Ascending aorta (tissue), 2 donors: ENCODE measurements at regions of chr7 and their contacts with region 1.

Region 1: DNA sequence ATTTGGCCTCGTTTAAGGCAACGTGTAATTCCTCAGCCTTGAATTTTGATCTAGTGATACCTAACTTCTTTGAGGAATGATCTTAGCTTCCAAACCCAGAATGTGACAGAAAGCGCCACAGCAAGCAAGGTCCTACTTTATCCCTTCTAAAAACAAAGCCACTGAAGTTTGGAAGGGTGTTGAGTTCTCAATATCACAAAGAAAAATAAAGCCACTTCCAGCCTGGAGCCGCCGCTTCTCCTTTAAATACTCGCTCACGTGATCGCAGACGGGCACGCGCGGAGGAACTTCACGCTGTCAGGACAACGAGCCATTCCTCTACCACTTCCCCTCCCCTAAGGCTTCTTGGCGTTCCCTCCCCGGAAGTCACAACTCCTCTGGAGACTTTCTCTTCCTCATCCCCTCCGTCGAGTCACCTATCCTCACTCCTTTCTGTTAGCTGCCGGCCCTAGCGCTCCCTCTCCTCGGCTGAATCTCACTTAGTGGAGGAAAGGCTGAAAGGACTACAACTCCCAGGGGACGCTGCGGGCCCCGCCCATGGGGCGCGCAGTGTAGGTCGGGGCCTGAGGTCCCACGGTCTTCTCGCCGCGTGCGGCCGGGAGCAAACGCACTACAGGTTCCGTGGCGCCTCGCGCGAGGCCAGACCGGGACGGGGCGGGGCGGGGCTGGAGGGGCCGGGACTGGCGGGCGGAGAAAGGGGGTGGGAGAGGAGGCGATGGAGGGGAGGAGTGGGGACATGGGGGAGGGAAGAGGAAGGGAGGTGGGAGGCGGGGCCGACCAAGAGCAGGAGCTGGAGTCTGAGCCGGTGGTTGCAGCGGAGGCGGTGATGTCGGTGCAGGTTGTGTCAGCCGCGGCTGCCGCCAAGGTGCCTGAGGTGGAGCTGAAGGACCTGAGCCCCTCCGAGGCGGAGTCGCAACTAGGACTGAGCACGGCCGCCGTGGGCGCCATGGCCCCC is at the start of gene AHCYL2:
- DNase-seq: peak; percentile 91 to 99
- H3K4me3 ChIP-seq: peak within 1 kb of the TSS; percentile 93 to 99
- H3K27ac ChIP-seq: peak within 1 kb of the TSS; percentile 88 to 96
- H3K4me1 ChIP-seq: peaks cover 0 to 9% of the 10 kb centered on the region in 2 donors
- H3K27me3 ChIP-seq: no peaks in the 10 kb centered on the region
- CTCF ChIP-seq: no peak
- total RNA-seq, gene AHCYL2: 62.9 TPM

Region 2: GRCh38 chr7:128940494-128941322 is 283.8 kb before region 1 on chr7:
- intact Hi-C with region 1: no loop called
- DNase-seq: peak; percentile 30 to 78
- H3K4me3 ChIP-seq: peak overlapping the region in 1 of 2 donors; percentile 9
- H3K27ac ChIP-seq: no peak overlapping the region
- H3K4me1 ChIP-seq: peaks cover 4 to 8% of the 10 kb centered on the region in 2 donors
- H3K27me3 ChIP-seq: no peaks in the 10 kb centered on the region
- CTCF ChIP-seq: no peak

Region 3: GRCh38 chr7:129122751-129123509 is 101.6 kb before region 1 on chr7:
- intact Hi-C with region 1: no loop called
- DNase-seq: no peak
- H3K4me3 ChIP-seq: no peak overlapping the region
- H3K27ac ChIP-seq: no peak overlapping the region
- H3K4me1 ChIP-seq: no peaks in the 10 kb centered on the region
- H3K27me3 ChIP-seq: no peaks in the 10 kb centered on the region
- CTCF ChIP-seq: no peak

Region 4: GRCh38 chr7:129271500-129272355 is 47.2 kb after region 1 on chr7:
- intact Hi-C with region 1: no loop called
- DNase-seq: no peak
- H3K4me3 ChIP-seq: no peak overlapping the region
- H3K27ac ChIP-seq: no peak overlapping the region
- H3K4me1 ChIP-seq: no peaks in the 10 kb centered on the region
- H3K27me3 ChIP-seq: no peaks in the 10 kb centered on the region
- CTCF ChIP-seq: peak; percentile 5 to 43 (median 28)

Region 5: DNA sequence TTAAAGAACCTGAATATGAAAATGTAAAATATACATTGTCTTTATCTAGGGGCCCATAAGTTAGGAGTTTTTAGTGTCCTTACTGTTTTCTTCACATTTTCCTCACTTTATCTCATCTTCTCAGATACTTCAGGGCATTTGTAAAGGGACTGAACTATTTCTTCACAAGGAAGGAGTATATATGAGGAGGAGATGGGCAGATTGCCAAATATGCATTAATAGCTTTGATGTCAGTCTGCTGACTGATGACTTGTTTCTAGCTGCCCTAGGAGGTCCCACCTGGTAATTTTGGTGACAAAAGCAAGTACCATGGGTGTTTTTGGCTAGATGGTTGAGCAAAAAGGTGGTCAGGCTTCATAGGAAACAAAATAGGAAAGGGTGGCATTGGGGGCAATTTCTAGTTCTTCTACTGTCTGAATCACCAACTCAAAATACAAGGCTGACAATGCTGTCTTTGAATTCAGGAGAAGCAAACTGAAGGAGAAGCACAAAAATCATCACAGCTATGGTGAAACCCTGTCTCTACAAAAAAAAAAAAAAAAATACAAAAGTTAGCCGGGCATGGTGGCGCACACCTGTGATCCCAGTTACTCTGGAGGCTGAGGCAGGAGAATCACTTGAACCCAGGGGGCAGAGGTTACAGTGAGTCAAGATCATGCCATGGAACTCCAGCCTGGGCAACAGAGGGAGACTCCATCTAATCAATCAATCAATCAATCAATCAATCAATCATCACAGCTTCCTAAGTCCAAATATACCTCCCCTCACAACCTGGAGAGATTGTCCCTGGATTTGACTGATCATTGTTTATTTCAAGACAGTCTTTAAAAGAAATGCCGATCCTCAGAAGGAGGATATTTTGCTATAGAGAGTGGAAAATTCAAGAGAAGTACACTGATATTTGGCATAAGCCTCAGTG is 199.4 kb after region 1 on chr7:
- intact Hi-C with region 1: no loop called
- DNase-seq: no peak
- H3K4me3 ChIP-seq: no peak overlapping the region
- H3K27ac ChIP-seq: no peak overlapping the region
- H3K4me1 ChIP-seq: no peaks in the 10 kb centered on the region
- H3K27me3 ChIP-seq: no peaks in the 10 kb centered on the region
- CTCF ChIP-seq: no peak

Region 6: GRCh38 chr7:129433847-129434674 is 209.5 kb after region 1 on chr7 and contains the start of gene STRIP2:
- intact Hi-C with region 1: loop called (anchors 2 kb)
- DNase-seq: peak; percentile 68 to 93
- H3K4me3 ChIP-seq: peak within 1 kb of the TSS; percentile 75 to 80
- H3K27ac ChIP-seq: peak within 1 kb of the TSS in 1 of 2 donors; percentile 9
- H3K4me1 ChIP-seq: peaks cover 3 to 7% of the 10 kb centered on the region in 2 donors
- H3K27me3 ChIP-seq: no peaks in the 10 kb centered on the region
- CTCF ChIP-seq: no peak
- total RNA-seq, gene STRIP2: 2.3 TPM

Region 7: GRCh38 chr7:129611246-129612111 is 387.0 kb after region 1 on chr7 and contains the start of gene NRF1:
- intact Hi-C with region 1: loop called (anchors 5 kb)
- DNase-seq: peak; percentile 45 to 93
- H3K4me3 ChIP-seq: peak within 1 kb of the TSS; percentile 69 to 91
- H3K27ac ChIP-seq: peak within 1 kb of the TSS; percentile 93 to 99
- H3K4me1 ChIP-seq: peaks cover 6 to 26% of the 10 kb centered on the region in 2 donors
- H3K27me3 ChIP-seq: no peaks in the 10 kb centered on the region
- CTCF ChIP-seq: peak in 2 of 3 experiments; percentile 10 to 39
- total RNA-seq, gene NRF1: 3.1 TPM

Region 8: DNA sequence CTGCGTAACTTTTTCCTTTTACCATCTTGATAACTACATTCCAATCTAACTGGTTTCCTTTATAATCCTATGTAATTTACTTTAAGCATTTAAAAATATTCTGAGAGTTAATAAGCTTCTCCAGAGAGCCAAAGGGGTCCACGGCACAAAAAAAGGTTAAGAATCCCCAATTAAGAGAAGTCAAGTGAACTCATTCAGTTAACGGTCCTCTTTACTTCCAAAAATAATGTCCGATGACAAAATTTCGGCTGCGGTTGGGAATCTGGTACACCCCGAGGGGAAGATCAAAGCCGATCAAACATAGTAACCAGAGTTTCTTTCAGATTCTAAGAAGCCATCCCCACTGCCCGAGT is 826.2 kb after region 1 on chr7:
- intact Hi-C with region 1: loop called (anchors 5 kb)
- DNase-seq: no peak
- H3K4me3 ChIP-seq: peak overlapping the region; percentile 60 to 76
- H3K27ac ChIP-seq: peak overlapping the region; percentile 59 to 65
- H3K4me1 ChIP-seq: peaks cover 0 to 9% of the 10 kb centered on the region in 2 donors
- H3K27me3 ChIP-seq: no peaks in the 10 kb centered on the region
- CTCF ChIP-seq: no peak